ENCODE measurements at regions of chr4 and their contacts with region 1.

Region 1: GRCh38 chr4:3531879-3532713 is at the start of gene LRPAP1:
- DNase-seq: peak; percentile 89 to 98 (median 94)
- H3K4me3 ChIP-seq: peak within 1 kb of the TSS; percentile 63 to 98 (median 87)
- H3K27ac ChIP-seq: peak within 1 kb of the TSS in 40 of 59 donors; percentile 13 to 83 (median 64)
- H3K27me3 ChIP-seq: no peaks in the 10 kb centered on the region
- CTCF ChIP-seq: peak in 18 of 56 donors; percentile 8 to 55 (median 17)
- total RNA-seq, gene LRPAP1: 104 to 234 (median 162) TPM

Region 2: GRCh38 chr4:3292571-3293400 is 239.3 kb before region 1 on chr4 and contains the start of gene RGS12:
- intact Hi-C with region 1: loop called in 1 of 2 experiments (anchors 2 kb)
- DNase-seq: peak; percentile 93 to 97 (median 94)
- H3K4me3 ChIP-seq: peak within 1 kb of the TSS; percentile 62 to 97 (median 91)
- H3K27ac ChIP-seq: peak within 1 kb of the TSS; percentile 18 to 98 (median 91)
- H3K27me3 ChIP-seq: peaks cover 0 to 1% (median 0%) of the 10 kb centered on the region in 45 donors
- CTCF ChIP-seq: peak in 23 of 56 donors; percentile 7 to 54 (median 21)
- total RNA-seq, gene RGS12: 37.5 to 114 (median 72.2) TPM

Region 3: DNA sequence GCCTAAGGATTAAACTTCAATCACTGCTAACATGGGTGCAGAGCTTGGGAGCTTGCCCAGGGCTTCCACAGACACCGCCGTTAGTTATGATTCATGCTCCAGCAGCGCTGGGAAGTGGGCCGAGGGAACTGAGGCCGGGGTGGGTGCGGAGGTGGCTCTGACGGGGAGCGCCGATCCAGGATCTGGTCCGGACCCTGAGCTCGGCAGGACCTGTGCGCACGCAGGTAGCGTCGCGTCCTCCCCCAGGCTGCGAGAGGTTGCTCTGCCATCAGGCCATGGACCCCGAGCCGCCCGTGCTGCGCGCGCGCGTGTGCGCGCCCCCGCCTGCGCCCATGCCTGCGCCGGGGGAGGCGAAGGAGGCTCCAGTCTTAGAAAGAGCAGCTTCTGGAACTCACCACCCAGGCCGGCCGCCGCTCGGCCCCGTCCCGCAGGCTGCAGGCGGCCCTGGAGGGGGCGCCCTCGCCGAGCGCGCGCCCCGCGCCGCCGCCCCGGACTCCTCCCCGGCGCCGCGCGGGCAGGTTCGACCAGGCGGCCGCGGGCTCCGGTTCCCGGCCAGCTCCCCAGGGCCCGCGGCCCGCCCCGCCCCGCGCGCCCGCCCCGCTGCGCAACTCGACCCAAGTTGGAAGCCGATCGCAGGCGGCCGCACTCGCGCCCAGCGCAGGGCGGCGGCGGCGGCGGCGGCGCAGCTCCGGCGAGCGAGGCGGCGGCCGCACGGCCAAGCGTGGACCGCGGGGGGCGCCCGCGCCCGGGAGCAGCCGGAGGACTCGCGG is 233.4 kb after region 1 on chr4:
- intact Hi-C with region 1: loop called in 1 of 2 experiments (anchors 5 kb)
- DNase-seq: peak in 9 of 10 donors; percentile 36 to 82 (median 67)
- H3K4me3 ChIP-seq: peak overlapping the region in 56 of 59 donors; percentile 19 to 68 (median 42)
- H3K27ac ChIP-seq: peak overlapping the region in 27 of 59 donors; percentile 22 to 80 (median 64)
- H3K27me3 ChIP-seq: peaks cover 0 to 34% (median 11%) of the 10 kb centered on the region in 45 donors
- CTCF ChIP-seq: peak in 12 of 56 donors; percentile 9 to 34 (median 20)

Measured in dorsolateral prefrontal cortex (tissue), 120 donors.